B cell (primary cell): ENCODE measurements at regions of chr3 and their contacts with region 1.

Region 1: DNA sequence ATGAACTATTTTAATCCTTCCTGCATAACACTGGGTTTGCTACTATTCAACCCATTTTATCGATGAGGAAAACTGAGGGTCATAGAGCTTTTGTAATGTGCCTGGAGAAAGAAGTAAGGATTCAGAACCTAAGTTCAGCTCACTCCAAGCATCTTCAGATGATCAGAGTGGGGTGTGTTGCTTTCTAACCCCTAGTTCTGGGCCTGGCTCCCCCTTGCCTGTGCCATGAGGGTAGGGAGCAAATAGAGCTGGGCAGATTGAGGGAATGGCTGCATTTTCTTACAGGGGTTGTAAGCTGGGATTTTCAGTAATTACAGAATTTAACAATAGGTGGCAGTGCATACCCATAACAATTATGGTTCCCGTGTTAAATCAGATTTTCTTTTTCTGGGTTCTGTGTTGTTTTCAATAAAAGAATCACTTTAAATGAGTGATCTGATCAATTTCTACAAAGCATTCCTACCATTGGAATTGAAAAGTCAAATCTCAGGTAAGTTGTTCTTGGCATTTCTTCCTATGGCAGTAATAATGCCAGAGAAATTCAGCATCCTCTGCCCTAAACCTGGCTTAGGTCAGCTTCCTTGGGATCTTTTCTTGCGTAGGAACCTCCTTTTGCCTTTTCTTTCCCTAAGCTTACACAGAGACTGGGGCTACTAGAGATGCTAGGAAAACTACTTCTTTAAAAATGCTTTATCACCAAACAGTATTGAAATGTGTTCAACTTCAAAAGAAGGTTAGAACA is 103.8 kb upstream of the IL12A start:
- DNase-seq: peak; percentile 64
- ATAC-seq: peak; percentile 49
- H3K4me3 ChIP-seq: no peak overlapping the region
- H3K4me3 Mint-ChIP-seq: no peak overlapping the region
- H3K27ac ChIP-seq: no peak overlapping the region
- H3K27ac Mint-ChIP-seq: no peak overlapping the region
- H3K4me1 ChIP-seq: no peaks in the 10 kb centered on the region
- H3K4me1 Mint-ChIP-seq: no peaks in the 10 kb centered on the region
- H3K27me3 ChIP-seq: no peaks in the 10 kb centered on the region
- H3K27me3 Mint-ChIP-seq: peaks cover 6% of the 10 kb centered on the region
- CTCF ChIP-seq: peak; percentile 88

Region 2: DNA sequence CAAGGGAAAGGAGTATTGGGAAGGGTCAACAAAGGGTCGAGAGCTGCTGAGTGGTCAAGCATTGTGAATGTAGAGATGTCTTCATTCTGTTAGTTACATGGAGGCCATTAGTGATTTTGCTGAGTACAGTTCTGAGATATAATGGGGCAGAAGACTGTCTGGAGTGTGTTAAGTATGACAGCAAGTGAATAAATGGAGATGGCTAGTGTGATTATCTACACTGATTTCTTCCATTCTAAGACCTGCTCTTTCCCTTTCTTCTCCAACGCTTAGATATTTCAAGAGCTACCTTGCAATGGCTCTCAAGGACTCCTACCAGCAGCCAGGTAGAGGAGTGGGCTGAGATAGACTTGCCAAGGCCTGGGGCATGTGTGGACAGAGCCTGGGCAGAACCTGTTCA is 866.5 kb before region 1 on chr3:
- CTCF ChIA-PET with region 1: no interaction called
- POLR2A ChIA-PET with region 1: no interaction called
- intact Hi-C with region 1: no loop called
- DNase-seq: no peak
- ATAC-seq: no peak
- H3K4me3 ChIP-seq: no peak overlapping the region
- H3K4me3 Mint-ChIP-seq: no peak overlapping the region
- H3K27ac ChIP-seq: no peak overlapping the region
- H3K27ac Mint-ChIP-seq: no peak overlapping the region
- H3K4me1 ChIP-seq: no peaks in the 10 kb centered on the region
- H3K4me1 Mint-ChIP-seq: no peaks in the 10 kb centered on the region
- H3K27me3 ChIP-seq: no peaks in the 10 kb centered on the region
- H3K27me3 Mint-ChIP-seq: no peaks in the 10 kb centered on the region
- CTCF ChIP-seq: no peak

Region 3: DNA sequence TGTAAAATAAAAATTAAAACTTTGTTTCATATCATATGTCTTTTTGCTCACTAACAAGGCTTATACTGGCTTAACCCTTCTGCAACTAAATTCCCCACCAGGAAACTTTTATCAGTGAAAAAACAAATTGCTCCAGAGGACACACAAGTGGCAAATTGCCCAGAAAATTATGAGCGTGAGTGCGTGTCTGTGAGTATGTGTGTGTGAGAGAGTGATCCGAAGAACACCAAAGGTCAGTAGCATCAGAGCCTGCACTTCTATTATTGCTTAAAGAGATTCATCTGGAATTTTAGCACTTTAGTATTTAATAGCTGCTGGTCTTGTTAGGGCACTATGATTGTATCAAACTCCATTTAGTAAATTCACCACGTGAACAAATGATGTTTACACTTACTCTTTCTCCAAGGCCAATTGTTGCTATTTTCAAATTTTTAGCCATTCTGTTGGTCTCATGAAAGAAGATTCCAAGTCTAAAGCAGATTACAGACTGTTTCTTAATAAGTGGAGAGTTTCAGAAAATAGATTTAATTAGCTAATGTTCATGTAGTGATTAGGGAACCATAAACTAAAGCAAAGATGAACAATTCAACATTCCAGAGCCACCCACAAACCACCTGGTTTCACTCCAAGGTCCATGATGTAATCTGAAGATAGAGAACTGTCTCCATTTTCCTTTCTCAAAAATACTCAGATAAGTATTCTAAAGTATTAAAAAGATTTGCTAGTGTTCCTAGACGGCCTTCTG is 12.7 kb after region 1 on chr3:
- CTCF ChIA-PET with region 1: interaction called, 63 read pairs
- POLR2A ChIA-PET with region 1: no interaction called
- intact Hi-C with region 1: no loop called
- DNase-seq: no peak
- ATAC-seq: no peak
- H3K4me3 ChIP-seq: no peak overlapping the region
- H3K4me3 Mint-ChIP-seq: no peak overlapping the region
- H3K27ac ChIP-seq: no peak overlapping the region
- H3K27ac Mint-ChIP-seq: no peak overlapping the region
- H3K4me1 ChIP-seq: peaks cover 0 to 2% of the 10 kb centered on the region in 2 donors
- H3K4me1 Mint-ChIP-seq: peaks cover 3% of the 10 kb centered on the region
- H3K27me3 ChIP-seq: no peaks in the 10 kb centered on the region
- H3K27me3 Mint-ChIP-seq: no peaks in the 10 kb centered on the region
- CTCF ChIP-seq: no peak

Region 4: DNA sequence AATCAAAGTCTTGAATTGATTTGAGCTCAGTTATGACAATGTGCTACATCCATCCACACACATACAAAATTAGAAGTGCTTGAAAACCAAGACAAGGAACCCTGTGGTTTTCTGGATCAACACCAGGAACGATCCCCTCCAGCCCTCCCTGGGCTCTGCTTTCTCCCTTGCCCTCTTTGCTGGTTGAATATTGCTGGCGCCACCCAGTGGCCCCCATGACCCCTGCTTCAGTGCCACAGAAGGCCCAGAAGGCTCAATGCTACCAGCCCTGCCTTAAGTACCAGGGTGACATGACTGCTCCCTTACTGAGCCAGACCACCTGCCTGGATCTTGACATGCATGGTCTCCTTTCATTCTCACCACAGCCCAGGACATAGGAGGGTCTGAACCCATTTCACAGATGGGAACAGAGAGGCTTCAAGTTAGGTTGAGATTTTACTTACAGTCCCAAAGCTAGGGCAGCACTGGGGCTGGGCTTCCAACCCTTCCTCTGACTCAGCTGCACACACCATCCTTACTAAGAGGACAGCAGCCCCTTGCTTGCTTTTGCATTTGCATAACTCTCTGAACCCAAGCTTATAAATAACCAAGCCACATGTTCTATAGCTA is 118.8 kb after region 1 on chr3:
- CTCF ChIA-PET with region 1: interaction called, 341 read pairs
- POLR2A ChIA-PET with region 1: no interaction called
- intact Hi-C with region 1: loop called (anchors 1 kb)
- DNase-seq: peak; percentile 64
- ATAC-seq: peak; percentile 82
- H3K4me3 ChIP-seq: no peak overlapping the region
- H3K4me3 Mint-ChIP-seq: no peak overlapping the region
- H3K27ac ChIP-seq: no peak overlapping the region
- H3K27ac Mint-ChIP-seq: peak overlapping the region; percentile 34
- H3K4me1 ChIP-seq: no peaks in the 10 kb centered on the region
- H3K4me1 Mint-ChIP-seq: peaks cover 6% of the 10 kb centered on the region
- H3K27me3 ChIP-seq: no peaks in the 10 kb centered on the region
- H3K27me3 Mint-ChIP-seq: no peaks in the 10 kb centered on the region
- CTCF ChIP-seq: peak; percentile 71

Region 5: GRCh38 chr3:160343132-160343531 is 458.3 kb after region 1 on chr3:
- CTCF ChIA-PET with region 1: interaction called, 16 read pairs
- POLR2A ChIA-PET with region 1: no interaction called
- intact Hi-C with region 1: no loop called
- DNase-seq: peak; percentile 9
- ATAC-seq: no peak
- H3K4me3 ChIP-seq: no peak overlapping the region
- H3K4me3 Mint-ChIP-seq: no peak overlapping the region
- H3K27ac ChIP-seq: no peak overlapping the region
- H3K27ac Mint-ChIP-seq: no peak overlapping the region
- H3K4me1 ChIP-seq: no peaks in the 10 kb centered on the region
- H3K4me1 Mint-ChIP-seq: no peaks in the 10 kb centered on the region
- H3K27me3 ChIP-seq: no peaks in the 10 kb centered on the region
- H3K27me3 Mint-ChIP-seq: no peaks in the 10 kb centered on the region
- CTCF ChIP-seq: peak; percentile 59